CD4-positive, alpha-beta T cell (primary cell): ENCODE measurements at regions of chr2 and their contacts with region 1.

Region 1: DNA sequence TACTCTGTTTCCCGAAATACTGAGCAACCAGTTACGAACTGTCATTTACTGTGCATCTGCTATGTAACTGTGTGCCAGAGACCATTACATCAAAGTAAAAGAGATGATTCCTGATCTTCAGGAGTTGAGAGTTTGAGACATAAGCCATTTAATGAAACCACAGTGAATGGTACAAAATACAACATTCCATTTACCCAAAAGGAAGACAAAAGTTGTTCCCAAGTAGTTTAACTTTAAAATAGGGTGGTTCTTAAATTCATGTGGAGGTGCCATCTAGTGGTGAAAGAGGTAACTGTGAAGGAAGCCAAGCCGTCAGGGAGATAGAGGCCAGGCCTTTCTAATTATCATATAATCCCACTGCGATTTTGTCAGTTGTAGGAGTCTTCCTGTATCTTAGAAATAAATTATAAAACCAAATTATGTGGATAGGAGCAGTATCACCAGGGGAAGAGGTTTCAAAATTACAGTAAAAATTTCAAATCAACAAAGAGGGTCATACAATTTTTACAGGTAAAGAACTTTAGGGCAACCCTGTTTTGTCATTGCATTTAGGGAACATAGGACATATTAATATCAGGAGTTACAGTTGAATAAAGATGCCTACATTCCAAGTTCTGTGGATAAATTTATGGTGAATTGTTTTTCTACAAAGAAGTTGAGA is 67.7 kb downstream of the EPAS1 start:
- DNase-seq: peak in 5 of 14 experiments; percentile 14 to 74 (median 64)
- ATAC-seq: peak; percentile 60
- H3K4me3 ChIP-seq: no peak overlapping the region
- H3K4me3 Mint-ChIP-seq: no peak overlapping the region
- H3K27ac ChIP-seq: no peak overlapping the region
- H3K27ac Mint-ChIP-seq: no peak overlapping the region
- H3K4me1 ChIP-seq: peaks cover 12% of the 10 kb centered on the region
- H3K4me1 Mint-ChIP-seq: peaks cover 37% of the 10 kb centered on the region
- H3K27me3 ChIP-seq: no peaks in the 10 kb centered on the region
- H3K27me3 Mint-ChIP-seq: no peaks in the 10 kb centered on the region
- CTCF ChIP-seq: peak; percentile 86

Region 2: DNA sequence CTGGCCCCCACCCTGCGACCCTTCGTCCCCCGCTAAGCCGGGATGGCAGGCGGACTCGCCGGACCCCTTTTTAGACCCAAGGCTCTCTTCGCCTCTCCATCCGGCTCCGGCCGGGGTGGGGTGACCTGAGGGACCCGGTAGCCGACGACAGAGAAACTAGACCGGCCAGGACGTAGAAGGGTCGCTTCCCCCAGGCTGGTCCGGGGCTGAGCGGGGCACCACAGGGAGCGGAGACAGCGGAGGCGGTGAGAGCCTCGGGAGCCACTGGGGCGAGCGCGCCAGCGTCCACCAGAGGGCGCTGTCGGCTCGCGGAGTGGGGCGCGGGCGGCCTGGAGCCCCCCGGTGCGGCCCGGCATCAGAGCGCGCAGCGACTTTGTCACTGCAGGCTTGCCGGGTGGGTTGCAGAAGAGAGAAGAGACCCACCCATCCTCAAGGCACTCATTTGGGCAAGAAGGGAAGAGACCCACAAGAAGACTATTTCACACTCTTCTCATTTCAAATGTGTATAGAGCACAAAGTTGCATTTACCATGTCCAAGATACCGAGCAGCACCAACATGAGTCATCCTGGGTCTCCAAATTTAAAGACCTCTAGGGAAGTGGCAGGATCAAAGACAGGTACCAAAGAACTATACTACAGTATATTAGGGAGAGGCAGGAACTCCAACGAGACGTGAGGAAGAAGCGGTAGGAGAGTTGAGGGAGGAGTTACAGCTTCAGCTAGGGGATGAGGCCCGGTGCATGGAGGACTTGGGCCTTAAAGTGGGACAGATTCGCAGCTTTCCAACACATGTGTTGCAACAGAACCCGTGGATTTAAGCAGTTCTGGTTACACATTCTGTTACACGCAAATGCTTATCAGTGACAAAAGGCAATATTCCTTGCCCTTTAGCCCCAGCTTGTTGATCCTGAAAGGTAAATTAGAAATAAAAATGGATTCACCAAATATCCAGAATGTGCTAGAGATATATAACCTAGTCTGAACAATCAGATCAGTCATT is 721.1 kb before region 1 on chr2:
- CTCF ChIA-PET with region 1: no interaction called
- POLR2A ChIA-PET with region 1: no interaction called
- intact Hi-C with region 1: loop called (anchors 10 kb)
- DNase-seq: peak; percentile 37 to 89 (median 72)
- ATAC-seq: peak; percentile 97
- H3K4me3 ChIP-seq: peak overlapping the region; percentile 50
- H3K4me3 Mint-ChIP-seq: no peak overlapping the region
- H3K27ac ChIP-seq: no peak overlapping the region
- H3K27ac Mint-ChIP-seq: no peak overlapping the region
- H3K4me1 ChIP-seq: peaks cover 10% of the 10 kb centered on the region
- H3K4me1 Mint-ChIP-seq: peaks cover 6% of the 10 kb centered on the region
- H3K27me3 ChIP-seq: peaks cover 15 to 22% of the 10 kb centered on the region in 2 experiments
- H3K27me3 Mint-ChIP-seq: peaks cover 33% of the 10 kb centered on the region
- CTCF ChIP-seq: peak; percentile 90

Region 3: GRCh38 chr2:46010925-46011490 is 353.9 kb before region 1 on chr2:
- CTCF ChIA-PET with region 1: no interaction called
- POLR2A ChIA-PET with region 1: no interaction called
- intact Hi-C with region 1: loop called (anchors 1 kb)
- DNase-seq: peak in 3 of 14 experiments; percentile 36 to 45 (median 36)
- ATAC-seq: no peak
- H3K4me3 ChIP-seq: no peak overlapping the region
- H3K4me3 Mint-ChIP-seq: no peak overlapping the region
- H3K27ac ChIP-seq: no peak overlapping the region
- H3K27ac Mint-ChIP-seq: no peak overlapping the region
- H3K4me1 ChIP-seq: no peaks in the 10 kb centered on the region
- H3K4me1 Mint-ChIP-seq: peaks cover 4% of the 10 kb centered on the region
- H3K27me3 ChIP-seq: no peaks in the 10 kb centered on the region
- H3K27me3 Mint-ChIP-seq: no peaks in the 10 kb centered on the region
- CTCF ChIP-seq: peak; percentile 57

Region 4: GRCh38 chr2:46252891-46253669 is 111.8 kb before region 1 on chr2:
- CTCF ChIA-PET with region 1: no interaction called
- POLR2A ChIA-PET with region 1: no interaction called
- intact Hi-C with region 1: no loop called
- DNase-seq: no peak
- ATAC-seq: no peak
- H3K4me3 ChIP-seq: no peak overlapping the region
- H3K4me3 Mint-ChIP-seq: no peak overlapping the region
- H3K27ac ChIP-seq: no peak overlapping the region
- H3K27ac Mint-ChIP-seq: no peak overlapping the region
- H3K4me1 ChIP-seq: no peaks in the 10 kb centered on the region
- H3K4me1 Mint-ChIP-seq: no peaks in the 10 kb centered on the region
- H3K27me3 ChIP-seq: no peaks in the 10 kb centered on the region
- H3K27me3 Mint-ChIP-seq: no peaks in the 10 kb centered on the region
- CTCF ChIP-seq: no peak

Region 5: GRCh38 chr2:46296840-46297545 is 67.9 kb before region 1 on chr2 and contains the start of gene EPAS1:
- CTCF ChIA-PET with region 1: no interaction called
- POLR2A ChIA-PET with region 1: interaction called, 3 read pairs
- intact Hi-C with region 1: loop called (anchors 5 kb)
- DNase-seq: peak; percentile 54 to 92 (median 74)
- ATAC-seq: peak; percentile 79
- H3K4me3 ChIP-seq: peak within 1 kb of the TSS; percentile 84
- H3K4me3 Mint-ChIP-seq: peak within 1 kb of the TSS; percentile 98
- H3K27ac ChIP-seq: no peak within 1 kb of the TSS
- H3K27ac Mint-ChIP-seq: peak within 1 kb of the TSS; percentile 78
- H3K4me1 ChIP-seq: peaks cover 34% of the 10 kb centered on the region
- H3K4me1 Mint-ChIP-seq: peaks cover 29% of the 10 kb centered on the region
- H3K27me3 ChIP-seq: peaks cover 35 to 39% of the 10 kb centered on the region in 2 experiments
- H3K27me3 Mint-ChIP-seq: peaks cover 39% of the 10 kb centered on the region
- CTCF ChIP-seq: no peak
- total RNA-seq, gene EPAS1: 4.2 to 5.4 TPM

Region 6: DNA sequence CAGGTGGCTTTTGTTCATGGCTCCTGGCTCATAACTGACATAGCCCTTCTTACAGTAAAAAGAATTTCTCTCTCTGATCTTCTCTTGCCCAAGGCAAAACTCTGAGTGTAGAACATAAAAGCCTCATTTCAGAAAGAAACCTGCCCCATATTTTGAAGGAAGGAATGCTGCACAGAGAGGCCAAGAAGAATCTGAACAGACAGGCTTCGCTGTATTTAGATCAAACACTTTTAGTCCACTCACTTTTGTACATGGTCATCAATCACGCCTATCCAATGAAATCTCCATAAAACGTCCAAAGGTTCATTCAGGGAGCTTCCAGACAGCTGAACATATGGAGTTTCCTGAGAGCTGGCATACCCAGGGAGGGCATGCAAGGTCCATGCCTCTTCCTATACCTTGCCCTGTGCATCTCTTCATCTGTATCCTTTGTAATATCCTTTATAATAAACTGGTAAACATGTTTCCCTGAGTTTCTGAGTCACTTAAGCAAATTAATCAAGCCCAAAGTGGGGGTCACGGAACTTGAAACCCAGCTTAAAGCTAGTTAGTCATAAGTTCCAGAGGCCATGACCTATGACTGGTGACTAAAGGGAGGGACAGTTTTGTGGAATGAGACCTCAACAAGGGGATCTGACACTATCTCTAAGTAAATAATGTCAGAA is 51.9 kb after region 1 on chr2:
- CTCF ChIA-PET with region 1: no interaction called
- POLR2A ChIA-PET with region 1: no interaction called
- intact Hi-C with region 1: no loop called
- DNase-seq: no peak
- ATAC-seq: no peak
- H3K4me3 ChIP-seq: no peak overlapping the region
- H3K4me3 Mint-ChIP-seq: no peak overlapping the region
- H3K27ac ChIP-seq: no peak overlapping the region
- H3K27ac Mint-ChIP-seq: no peak overlapping the region
- H3K4me1 ChIP-seq: no peaks in the 10 kb centered on the region
- H3K4me1 Mint-ChIP-seq: no peaks in the 10 kb centered on the region
- H3K27me3 ChIP-seq: no peaks in the 10 kb centered on the region
- H3K27me3 Mint-ChIP-seq: no peaks in the 10 kb centered on the region
- CTCF ChIP-seq: no peak

Region 7: DNA sequence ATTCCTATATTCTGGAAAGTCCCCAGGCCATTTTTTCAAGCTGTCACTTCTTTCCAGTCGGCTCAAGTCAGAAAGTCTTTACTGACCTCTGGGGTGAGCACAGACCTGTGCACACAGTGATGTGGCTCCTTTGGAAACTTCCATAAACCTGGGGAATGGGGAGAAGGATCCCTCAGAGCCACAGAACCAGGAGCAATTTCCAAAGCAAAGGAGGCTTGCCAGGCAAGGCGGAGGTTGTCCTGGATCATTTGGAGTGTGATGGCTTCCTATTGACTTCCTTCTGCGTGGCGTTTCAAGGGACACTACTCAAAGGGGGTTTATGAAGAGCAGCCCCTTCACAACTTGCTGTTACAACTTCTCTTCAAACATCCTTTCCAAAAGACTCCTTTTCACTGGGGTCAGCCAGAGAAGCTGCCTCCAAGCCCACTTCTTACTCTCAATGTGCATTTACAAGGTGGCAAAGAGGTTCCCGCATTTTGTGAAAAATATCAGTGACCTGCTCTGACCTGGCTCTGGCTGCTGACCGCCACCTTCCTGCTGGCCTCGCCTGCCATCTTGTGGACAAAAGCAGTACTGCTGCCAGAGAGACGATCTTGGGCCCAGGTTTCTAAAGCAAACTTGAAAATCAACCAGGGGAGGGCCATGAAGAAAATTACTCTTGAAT is 96.2 kb after region 1 on chr2:
- CTCF ChIA-PET with region 1: no interaction called
- POLR2A ChIA-PET with region 1: no interaction called
- intact Hi-C with region 1: loop called in 1 of 2 experiments (anchors 2 kb)
- DNase-seq: peak; percentile 41 to 83 (median 68)
- ATAC-seq: peak; percentile 60
- H3K4me3 ChIP-seq: no peak overlapping the region
- H3K4me3 Mint-ChIP-seq: no peak overlapping the region
- H3K27ac ChIP-seq: no peak overlapping the region
- H3K27ac Mint-ChIP-seq: no peak overlapping the region
- H3K4me1 ChIP-seq: peaks cover 12% of the 10 kb centered on the region
- H3K4me1 Mint-ChIP-seq: peaks cover 10% of the 10 kb centered on the region
- H3K27me3 ChIP-seq: no peaks in the 10 kb centered on the region
- H3K27me3 Mint-ChIP-seq: peaks cover 5% of the 10 kb centered on the region
- CTCF ChIP-seq: peak; percentile 100